ENCODE measurements at regions of chr1 and their contacts with region 1.

Region 1: DNA sequence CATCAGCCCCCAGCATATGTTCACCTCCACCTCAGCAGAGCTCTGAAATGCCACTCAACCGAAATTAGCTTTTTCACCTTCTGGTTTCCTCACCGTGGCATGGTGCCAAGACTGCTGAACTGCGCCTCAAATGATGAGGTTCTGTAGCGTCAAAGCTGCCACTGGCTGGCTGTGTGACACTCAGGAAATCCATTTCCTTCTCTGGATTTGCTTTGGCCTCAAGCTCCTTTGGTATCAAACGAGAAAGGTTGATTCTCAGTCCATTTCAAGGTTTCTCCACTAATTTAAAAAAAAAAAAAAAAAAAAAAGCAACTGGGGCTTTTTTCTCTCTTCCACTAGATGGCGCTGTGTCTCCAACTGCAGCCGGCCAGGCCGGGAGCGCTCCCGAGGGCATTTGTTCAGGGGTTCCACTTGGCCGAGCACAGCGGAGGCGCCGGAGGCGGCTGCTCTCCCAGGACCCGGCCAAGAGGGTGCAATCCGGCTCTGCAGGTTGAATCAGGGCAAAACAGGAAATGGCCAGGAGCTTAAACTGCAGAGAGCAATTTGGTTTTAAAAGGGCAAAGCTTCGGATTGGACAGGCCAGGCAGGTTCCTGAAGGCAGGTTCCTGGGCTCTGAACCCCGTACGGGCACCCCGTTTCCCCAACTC is 26.5 kb upstream of the PLA2G2C start:
- DNase-seq: peak; percentile 81 to 82
- H3K4me3 ChIP-seq: peak overlapping the region in 1 of 4 experiments; percentile 16; a peak in 1 of 8 replicates
- H3K27ac ChIP-seq: no peak overlapping the region
- H3K4me1 ChIP-seq: peaks cover 0 to 4% (median 2%) of the 10 kb centered on the region in 4 experiments; a peak in 3 of 7 replicates
- H3K27me3 ChIP-seq: no peaks in the 10 kb centered on the region; a peak in 1 of 7 replicates
- CTCF ChIP-seq: peak; percentile 32 to 90 (median 43)
- EP300 ChIP-seq: peak in 1 of 2 experiments; percentile 56; a peak in 1 of 3 replicates
- POLR2A ChIP-seq: no peak
- RAD21 ChIP-seq: peak; percentile 79 to 88

Region 2: GRCh38 chr1:19918057-19918456 is 294.8 kb before region 1 on chr1:
- CTCF ChIA-PET with region 1: interaction called, 10 read pairs
- POLR2A ChIA-PET with region 1: no interaction called
- DNase-seq: peak; percentile 43 to 92
- H3K4me3 ChIP-seq: no peak overlapping the region
- H3K27ac ChIP-seq: no peak overlapping the region
- H3K4me1 ChIP-seq: peaks cover 0 to under 1% (median 0%) of the 10 kb centered on the region in 4 experiments; a peak in 1 of 7 replicates
- H3K27me3 ChIP-seq: no peaks in the 10 kb centered on the region
- CTCF ChIP-seq: peak; percentile 72 to 95 (median 87)
- EP300 ChIP-seq: no peak
- POLR2A ChIP-seq: no peak
- RAD21 ChIP-seq: peak; percentile 96 to 98

Region 3: DNA sequence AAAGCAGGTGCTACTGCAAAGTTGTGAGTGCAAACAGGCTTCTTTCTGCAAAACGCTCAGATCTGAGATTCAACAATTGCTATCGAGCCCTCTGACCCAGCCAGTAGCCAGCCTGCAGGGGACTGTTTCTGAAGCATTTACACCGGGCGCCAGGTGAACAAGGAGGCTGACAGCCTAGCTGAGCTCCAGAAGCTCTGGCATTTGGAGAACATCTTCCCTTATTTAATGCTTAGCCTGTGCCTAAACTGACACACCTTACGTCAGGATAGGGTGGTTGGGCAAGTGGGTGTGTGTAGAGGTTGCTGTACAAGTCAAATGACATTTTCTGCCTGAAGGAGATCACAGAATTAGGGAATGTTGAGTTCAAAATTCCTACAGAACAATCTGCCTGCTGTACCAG is 10.6 kb before region 1 on chr1:
- CTCF ChIA-PET with region 1: interaction called, 11 read pairs
- POLR2A ChIA-PET with region 1: no interaction called
- DNase-seq: no peak
- H3K4me3 ChIP-seq: no peak overlapping the region
- H3K27ac ChIP-seq: no peak overlapping the region
- H3K4me1 ChIP-seq: no peaks in the 10 kb centered on the region
- H3K27me3 ChIP-seq: no peaks in the 10 kb centered on the region; a peak in 1 of 7 replicates
- CTCF ChIP-seq: no peak
- EP300 ChIP-seq: no peak
- POLR2A ChIP-seq: no peak
- RAD21 ChIP-seq: no peak

Region 4: DNA sequence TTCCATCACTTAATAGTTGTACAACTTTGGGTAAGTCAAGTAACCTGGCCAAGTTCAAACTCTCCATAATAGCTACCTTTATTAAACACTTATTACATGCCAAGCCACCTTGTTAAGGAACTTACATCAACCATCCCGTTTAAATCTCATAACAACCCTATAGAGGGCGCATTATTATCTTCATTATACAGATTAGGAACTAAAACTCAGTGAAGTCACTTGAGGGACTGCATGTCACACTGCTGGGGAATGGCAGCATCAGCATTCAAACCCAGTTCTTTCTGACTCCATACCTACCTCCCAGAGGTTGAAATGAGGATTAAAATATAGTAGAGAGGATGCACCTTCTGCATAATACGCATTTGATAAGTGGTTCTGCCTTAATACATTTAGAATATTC is 20.6 kb after region 1 on chr1:
- CTCF ChIA-PET with region 1: interaction called, 13 read pairs
- POLR2A ChIA-PET with region 1: no interaction called
- DNase-seq: no peak
- H3K4me3 ChIP-seq: no peak overlapping the region
- H3K27ac ChIP-seq: no peak overlapping the region
- H3K4me1 ChIP-seq: peaks cover 2 to 4% (median 3%) of the 10 kb centered on the region in 4 experiments; a peak in 3 of 7 replicates
- H3K27me3 ChIP-seq: no peaks in the 10 kb centered on the region; a peak in 1 of 7 replicates
- CTCF ChIP-seq: peak in 1 of 3 experiments; percentile 53; a peak in 2 of 4 replicates
- EP300 ChIP-seq: no peak
- POLR2A ChIP-seq: no peak
- RAD21 ChIP-seq: peak; percentile 24 to 28; a peak in 2 of 4 replicates

Region 5: GRCh38 chr1:20298626-20299025 is 85.8 kb after region 1 on chr1:
- CTCF ChIA-PET with region 1: interaction called, 10 read pairs
- POLR2A ChIA-PET with region 1: no interaction called
- DNase-seq: no peak
- H3K4me3 ChIP-seq: no peak overlapping the region
- H3K27ac ChIP-seq: no peak overlapping the region
- H3K4me1 ChIP-seq: no peaks in the 10 kb centered on the region
- H3K27me3 ChIP-seq: no peaks in the 10 kb centered on the region
- CTCF ChIP-seq: no peak
- EP300 ChIP-seq: no peak
- POLR2A ChIP-seq: no peak
- RAD21 ChIP-seq: no peak

Region 6: GRCh38 chr1:20329793-20330542 is 117.2 kb after region 1 on chr1:
- CTCF ChIA-PET with region 1: interaction called, 11 read pairs
- POLR2A ChIA-PET with region 1: no interaction called
- DNase-seq: peak in 1 of 2 experiments; percentile 52
- H3K4me3 ChIP-seq: no peak overlapping the region
- H3K27ac ChIP-seq: no peak overlapping the region
- H3K4me1 ChIP-seq: no peaks in the 10 kb centered on the region
- H3K27me3 ChIP-seq: no peaks in the 10 kb centered on the region
- CTCF ChIP-seq: peak; percentile 54 to 56 (median 54)
- EP300 ChIP-seq: no peak
- POLR2A ChIP-seq: no peak
- RAD21 ChIP-seq: peak; percentile 40 to 53

Region 7: DNA sequence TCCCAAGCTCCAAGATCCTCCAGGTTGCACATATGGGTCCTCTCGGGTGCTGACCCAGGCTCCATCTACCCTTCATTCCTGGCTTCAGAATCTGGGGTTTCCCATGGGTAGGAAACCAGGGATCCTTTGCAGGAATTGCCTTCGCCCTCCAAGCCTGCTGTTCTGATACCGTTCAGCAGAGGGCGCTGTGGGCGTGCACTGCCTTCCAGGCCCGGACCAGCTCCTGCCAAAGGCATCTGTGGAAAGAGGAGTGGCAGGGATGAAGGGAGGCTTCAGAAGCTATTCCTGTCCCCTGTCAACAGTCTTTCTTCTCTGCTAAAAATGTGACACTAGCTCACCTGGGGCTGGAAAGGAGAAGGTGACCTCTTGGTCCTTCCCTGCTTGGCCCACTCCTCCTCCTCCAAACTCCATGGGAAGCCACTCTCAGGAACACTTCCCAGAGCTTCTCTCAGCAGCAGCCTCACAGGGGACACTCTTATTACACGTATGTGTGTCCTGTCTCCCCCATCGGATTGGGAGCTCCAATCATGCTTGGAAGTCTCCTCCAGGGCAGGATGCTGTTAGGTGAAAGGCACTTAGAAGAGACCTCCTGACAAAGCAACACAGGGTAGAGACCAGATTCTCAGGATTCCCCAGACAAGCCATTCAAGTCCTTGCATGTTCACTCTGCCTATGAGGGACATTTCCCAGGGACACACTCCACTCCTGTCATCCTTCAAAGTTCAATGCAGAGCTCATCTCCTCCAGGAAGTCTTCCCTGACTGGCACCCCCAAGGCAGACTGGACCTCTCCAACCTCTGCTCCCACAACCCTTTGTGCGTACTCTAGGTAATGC is 149.2 kb after region 1 on chr1:
- CTCF ChIA-PET with region 1: interaction called, 32 read pairs
- POLR2A ChIA-PET with region 1: no interaction called
- DNase-seq: peak; percentile 54 to 99
- H3K4me3 ChIP-seq: no peak overlapping the region
- H3K27ac ChIP-seq: no peak overlapping the region
- H3K4me1 ChIP-seq: peaks cover 0 to 10% (median 4%) of the 10 kb centered on the region in 4 experiments; a peak in 4 of 7 replicates
- H3K27me3 ChIP-seq: peaks cover 13 to 48% (median 30%) of the 10 kb centered on the region in 4 experiments
- CTCF ChIP-seq: peak; percentile 96 to 98 (median 97)
- EP300 ChIP-seq: no peak
- POLR2A ChIP-seq: no peak
- RAD21 ChIP-seq: peak; percentile 90 to 91

Region 8: GRCh38 chr1:20399606-20400180 is 186.9 kb after region 1 on chr1:
- CTCF ChIA-PET with region 1: no interaction called
- POLR2A ChIA-PET with region 1: no interaction called
- DNase-seq: no peak
- H3K4me3 ChIP-seq: no peak overlapping the region
- H3K27ac ChIP-seq: no peak overlapping the region
- H3K4me1 ChIP-seq: peaks cover 0 to 4% (median 0%) of the 10 kb centered on the region in 4 experiments; a peak in 1 of 7 replicates
- H3K27me3 ChIP-seq: peaks cover 35 to 69% (median 54%) of the 10 kb centered on the region in 4 experiments
- CTCF ChIP-seq: no peak
- EP300 ChIP-seq: no peak
- POLR2A ChIP-seq: no peak
- RAD21 ChIP-seq: no peak

Measured in H1 (cell line).